HEK293 (cell line): ENCODE measurements at regions of chr9 and their contacts with region 1.

Region 1: DNA sequence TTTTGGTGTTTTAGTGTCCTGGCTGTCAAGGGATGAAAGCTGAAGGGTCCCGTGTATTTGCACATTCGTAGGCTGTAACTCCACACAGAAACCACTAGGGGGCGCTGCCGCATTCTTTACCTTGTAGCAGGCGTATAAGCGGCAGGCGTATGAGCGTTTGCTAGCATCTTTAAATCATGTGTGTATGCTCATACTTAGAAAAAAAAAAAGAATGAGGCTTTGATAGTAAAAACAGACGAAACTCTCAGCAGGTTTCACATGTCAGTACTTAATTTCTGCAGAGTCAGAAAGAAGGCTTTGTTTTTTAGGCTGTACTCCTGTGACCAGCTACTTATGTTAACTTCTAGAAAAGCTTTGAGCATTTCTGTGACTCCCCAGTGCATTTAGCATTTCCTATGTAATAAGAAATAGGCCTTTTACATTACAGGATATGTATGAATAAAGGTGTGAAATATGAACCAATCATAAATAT is 218.8 kb upstream of the ADAMTSL1 start:
- H3K4me3 ChIP-seq: no peak overlapping the region
- H3K27ac ChIP-seq: no peak overlapping the region
- H3K4me1 ChIP-seq: no peaks in the 10 kb centered on the region
- CTCF ChIP-seq: peak; percentile 34; the same call in 1 of the 2 replicates

Region 2: GRCh38 chr9:17730899-17731298 is 524.3 kb before region 1 on chr9:
- CTCF ChIA-PET with region 1: no interaction called
- POLR2A ChIA-PET with region 1: no interaction called
- H3K4me3 ChIP-seq: no peak overlapping the region
- H3K27ac ChIP-seq: no peak overlapping the region
- H3K4me1 ChIP-seq: no peaks in the 10 kb centered on the region
- CTCF ChIP-seq: no peak

Region 3: DNA sequence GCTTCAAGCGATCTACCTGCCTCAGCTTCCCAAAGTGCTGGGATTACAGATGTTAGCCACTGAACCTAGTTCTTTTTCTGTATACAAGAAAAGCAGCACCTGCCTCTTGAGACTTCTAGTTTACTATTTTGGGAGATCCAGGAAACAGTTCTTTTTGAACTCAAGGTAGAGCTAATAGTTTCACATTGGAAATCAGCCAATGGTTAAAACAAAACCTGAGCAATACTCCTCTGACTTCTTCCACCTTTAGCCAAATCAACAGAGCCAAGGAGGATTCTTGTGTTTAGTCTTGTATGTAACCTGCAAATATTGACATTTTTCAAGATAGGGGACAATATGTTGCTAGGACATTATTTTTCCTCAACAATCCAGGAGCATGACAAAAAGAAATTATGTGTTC is 327.0 kb before region 1 on chr9:
- CTCF ChIA-PET with region 1: no interaction called
- POLR2A ChIA-PET with region 1: no interaction called
- H3K4me3 ChIP-seq: no peak overlapping the region
- H3K27ac ChIP-seq: no peak overlapping the region
- H3K4me1 ChIP-seq: no peaks in the 10 kb centered on the region
- CTCF ChIP-seq: no peak

Region 4: GRCh38 chr9:18114559-18115475 is 140.4 kb before region 1 on chr9:
- CTCF ChIA-PET with region 1: no interaction called
- POLR2A ChIA-PET with region 1: no interaction called
- H3K4me3 ChIP-seq: no peak overlapping the region
- H3K27ac ChIP-seq: no peak overlapping the region
- H3K4me1 ChIP-seq: no peaks in the 10 kb centered on the region
- CTCF ChIP-seq: no peak

Region 5: GRCh38 chr9:18238254-18238653 is 16.9 kb before region 1 on chr9:
- CTCF ChIA-PET with region 1: interaction called, 20 read pairs
- POLR2A ChIA-PET with region 1: no interaction called
- H3K4me3 ChIP-seq: no peak overlapping the region
- H3K27ac ChIP-seq: no peak overlapping the region
- H3K4me1 ChIP-seq: peaks cover 2% of the 10 kb centered on the region; the same call in 1 of the 2 replicates
- CTCF ChIP-seq: no peak

Region 6: DNA sequence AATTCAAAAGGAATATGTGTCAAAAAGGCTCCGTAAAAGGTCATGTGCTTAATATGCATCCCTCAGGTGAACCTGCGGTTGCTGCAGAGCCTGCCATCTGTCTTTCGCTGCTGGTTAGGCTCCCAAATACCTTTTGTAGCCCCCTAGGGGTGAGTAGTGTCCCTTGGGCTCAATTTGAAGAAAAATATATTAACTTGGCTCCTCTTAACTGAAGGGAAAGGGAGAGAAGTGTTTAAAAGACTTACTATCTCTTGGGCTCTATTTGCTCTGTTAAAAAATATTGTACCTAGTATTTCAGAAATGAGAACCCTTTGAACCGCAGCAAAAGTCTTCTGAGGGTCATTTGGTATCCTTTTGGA is 42.3 kb after region 1 on chr9:
- CTCF ChIA-PET with region 1: interaction called, 14 read pairs
- POLR2A ChIA-PET with region 1: no interaction called
- H3K4me3 ChIP-seq: no peak overlapping the region
- H3K27ac ChIP-seq: no peak overlapping the region
- H3K4me1 ChIP-seq: peaks cover 4% of the 10 kb centered on the region; the same call in 1 of the 2 replicates
- CTCF ChIP-seq: no peak

Region 7: GRCh38 chr9:18393340-18394130 is 138.3 kb after region 1 on chr9:
- CTCF ChIA-PET with region 1: interaction called, 67 read pairs
- POLR2A ChIA-PET with region 1: no interaction called
- H3K4me3 ChIP-seq: no peak overlapping the region
- H3K27ac ChIP-seq: peak overlapping the region; percentile 81
- H3K4me1 ChIP-seq: peaks cover 19% of the 10 kb centered on the region
- CTCF ChIP-seq: no peak

Region 8: GRCh38 chr9:18437315-18438201 is 182.4 kb after region 1 on chr9:
- CTCF ChIA-PET with region 1: interaction called, 117 read pairs
- POLR2A ChIA-PET with region 1: interaction called, 3 read pairs
- H3K4me3 ChIP-seq: no peak overlapping the region
- H3K27ac ChIP-seq: no peak overlapping the region
- H3K4me1 ChIP-seq: no peaks in the 10 kb centered on the region
- CTCF ChIP-seq: no peak

Region 9: DNA sequence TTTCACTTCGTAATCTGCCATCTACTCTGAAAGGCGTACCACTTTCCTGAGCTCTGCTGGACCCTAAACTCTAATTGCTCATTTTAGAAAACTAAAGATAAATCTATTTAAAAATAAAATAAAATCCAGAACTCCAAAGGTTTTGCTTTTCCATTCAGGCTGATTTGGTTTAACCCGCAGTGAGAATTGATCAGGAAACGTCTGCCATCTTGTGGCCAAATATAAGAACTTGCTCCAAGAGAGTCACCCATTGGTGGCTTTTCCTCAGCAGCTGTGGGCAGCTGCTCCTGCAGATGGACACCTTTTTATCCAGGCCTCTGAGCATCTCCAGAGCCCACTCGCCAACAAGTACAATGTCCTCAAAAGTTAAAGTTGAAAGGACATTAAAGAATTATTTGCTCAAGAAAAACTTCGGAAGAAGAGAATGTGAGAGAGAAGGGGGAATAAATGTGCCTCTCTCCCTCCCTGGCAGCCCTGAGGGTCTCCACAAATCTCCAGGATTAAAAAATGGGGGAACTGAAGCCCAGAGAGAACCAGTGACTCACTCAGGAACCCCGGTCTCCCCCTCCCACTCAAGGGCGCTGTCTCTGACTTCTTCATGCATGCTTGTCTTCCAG is 773.7 kb after region 1 on chr9:
- CTCF ChIA-PET with region 1: interaction called, 36 read pairs
- POLR2A ChIA-PET with region 1: no interaction called
- H3K4me3 ChIP-seq: no peak overlapping the region
- H3K27ac ChIP-seq: no peak overlapping the region
- H3K4me1 ChIP-seq: no peaks in the 10 kb centered on the region
- CTCF ChIP-seq: no peak